IMR-90 (cell line): ENCODE measurements at regions of chr1 and their contacts with region 1.

Region 1: GRCh38 chr1:220067269-220068204 is 21.2 kb upstream of the EPRS1 start:
- DNase-seq: peak; percentile 66
- ATAC-seq: no peak
- H3K4me3 ChIP-seq: no peak overlapping the region
- H3K27ac ChIP-seq: no peak overlapping the region
- H3K4me1 ChIP-seq: peaks cover 3% of the 10 kb centered on the region; the same call in 1 of the 2 replicates
- H3K27me3 ChIP-seq: no peaks in the 10 kb centered on the region
- CTCF ChIP-seq: no peak
- POLR2A ChIP-seq: no peak
- RAD21 ChIP-seq: no peak

Region 2: DNA sequence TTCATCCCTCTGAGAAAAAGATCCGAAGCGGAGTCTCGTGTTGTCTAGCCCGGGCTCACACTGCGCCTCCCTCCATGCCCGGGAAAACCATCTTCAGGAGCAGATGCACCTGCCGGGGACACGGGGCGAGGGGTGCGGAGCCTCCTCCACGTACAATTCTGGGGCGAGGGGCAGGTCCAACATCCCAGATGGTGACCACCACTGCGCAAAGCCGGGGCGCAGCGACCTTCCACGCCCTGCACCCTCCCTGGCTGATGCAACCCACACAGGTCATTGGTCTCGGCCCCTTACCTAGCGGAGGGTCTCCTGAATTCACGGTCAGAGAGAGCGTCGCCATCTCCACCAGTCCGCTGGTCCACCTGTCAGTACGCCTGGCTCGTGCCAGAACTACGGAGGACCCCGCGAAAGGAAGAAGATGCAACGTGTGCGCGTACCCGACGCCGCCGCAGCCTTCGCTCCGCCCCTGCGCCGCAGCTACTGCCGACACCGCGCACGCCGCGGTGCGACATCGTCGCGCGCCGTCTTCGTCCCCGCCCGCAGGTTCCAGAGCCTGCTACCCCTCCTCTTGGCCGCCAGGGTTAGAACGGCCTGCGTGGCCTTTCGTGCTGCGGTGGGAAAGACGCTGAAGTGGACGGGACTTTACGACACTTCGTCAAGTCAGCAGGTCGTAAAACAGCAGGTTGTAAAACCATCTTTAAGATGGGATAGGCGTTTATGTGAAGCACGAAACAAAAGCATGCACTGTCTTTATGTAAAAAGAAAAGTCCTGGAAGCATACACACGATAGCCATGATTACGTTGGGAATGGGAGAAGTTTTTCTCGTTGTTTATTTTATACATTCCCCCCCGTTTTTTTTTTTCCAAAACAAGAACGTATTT is 21.2 kb before region 1 on chr1 and contains the start of gene EPRS1:
- CTCF ChIA-PET with region 1: no interaction called
- POLR2A ChIA-PET with region 1: no interaction called
- dilution Hi-C with region 1: no loop called
- in situ Hi-C with region 1: no loop called
- intact Hi-C with region 1: loop called (anchors 2 kb)
- DNase-seq: peak; percentile 99
- ATAC-seq: peak; percentile 100
- H3K4me3 ChIP-seq: peak within 1 kb of the TSS; percentile 85
- H3K27ac ChIP-seq: peak within 1 kb of the TSS; percentile 91
- H3K4me1 ChIP-seq: 0 out of 2 replicates have a peak, but pooled peaks cover 3% of the 10 kb centered on the region
- H3K27me3 ChIP-seq: no peaks in the 10 kb centered on the region
- CTCF ChIP-seq: peak; percentile 73
- POLR2A ChIP-seq: peak; percentile 57
- RAD21 ChIP-seq: peak; percentile 26; the same call in 1 of the 2 replicates
- total RNA-seq, gene EPRS1: 159 and 206 TPM in 2 replicates

Region 3: DNA sequence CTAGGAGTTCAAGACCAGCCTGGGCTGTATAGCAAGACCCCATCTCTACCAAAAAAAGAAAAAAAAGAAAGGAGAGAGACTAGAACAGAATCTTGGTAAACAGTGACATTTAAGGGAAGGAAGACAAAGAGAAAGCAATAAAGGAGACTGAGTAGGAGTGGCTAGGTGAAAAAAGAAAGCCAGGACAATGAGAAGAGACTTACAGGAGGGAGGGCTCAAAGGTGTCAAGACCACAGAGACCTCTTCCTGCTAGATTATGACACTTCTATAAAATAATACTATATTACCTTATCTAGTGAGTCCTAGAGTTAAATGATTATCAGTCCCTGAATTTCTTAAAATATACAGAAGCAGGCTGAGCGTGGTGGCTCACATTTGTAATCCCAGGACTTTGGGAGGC is 11.2 kb before region 1 on chr1:
- CTCF ChIA-PET with region 1: no interaction called
- POLR2A ChIA-PET with region 1: no interaction called
- dilution Hi-C with region 1: no loop called
- in situ Hi-C with region 1: no loop called
- intact Hi-C with region 1: loop called (anchors 2 kb)
- DNase-seq: no peak
- ATAC-seq: no peak
- H3K4me3 ChIP-seq: no peak overlapping the region
- H3K27ac ChIP-seq: no peak overlapping the region
- H3K4me1 ChIP-seq: no peaks in the 10 kb centered on the region
- H3K27me3 ChIP-seq: no peaks in the 10 kb centered on the region
- CTCF ChIP-seq: no peak
- POLR2A ChIP-seq: no peak
- RAD21 ChIP-seq: no peak

Region 4: GRCh38 chr1:220432425-220432824 is 364.9 kb after region 1 on chr1:
- CTCF ChIA-PET with region 1: no interaction called
- POLR2A ChIA-PET with region 1: no interaction called
- dilution Hi-C with region 1: no loop called
- in situ Hi-C with region 1: no loop called
- intact Hi-C with region 1: no loop called
- DNase-seq: no peak
- ATAC-seq: no peak
- H3K4me3 ChIP-seq: no peak overlapping the region
- H3K27ac ChIP-seq: no peak overlapping the region
- H3K4me1 ChIP-seq: no peaks in the 10 kb centered on the region
- H3K27me3 ChIP-seq: no peaks in the 10 kb centered on the region
- CTCF ChIP-seq: no peak
- POLR2A ChIP-seq: no peak
- RAD21 ChIP-seq: no peak